Endothelial cell of umbilical vein (primary cell): ENCODE measurements at regions of chr19 and their contacts with region 1.

Region 1: DNA sequence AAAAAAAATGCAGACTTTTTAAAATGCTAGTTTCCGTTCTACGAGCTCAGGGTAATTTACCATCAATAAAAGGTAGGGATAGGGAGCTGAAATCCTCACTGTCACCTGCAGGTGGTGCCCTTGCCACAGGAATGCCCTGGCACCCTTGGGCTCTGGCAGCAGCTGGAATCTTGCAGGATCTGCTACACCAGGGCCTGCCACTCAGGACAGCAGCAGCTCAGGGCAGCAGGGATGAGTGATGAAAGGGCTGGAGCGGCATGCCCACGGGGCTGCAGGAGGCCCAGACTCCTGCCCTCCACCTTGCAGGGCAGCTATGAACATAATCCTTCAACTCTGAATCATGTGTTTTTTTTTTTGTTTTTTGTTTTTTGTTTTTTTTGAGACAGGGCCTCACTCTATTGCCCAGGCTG is 54.0 kb downstream of the GNG7 start:
- DNase-seq: peak; percentile 72
- H3K4me3 ChIP-seq: no peak overlapping the region
- H3K27ac ChIP-seq: no peak overlapping the region
- H3K4me1 ChIP-seq: no peaks in the 10 kb centered on the region
- H3K27me3 ChIP-seq: peaks cover 0 to 3% of the 10 kb centered on the region in 2 experiments
- CTCF ChIP-seq: peak; percentile 73 to 87
- POLR2A ChIP-seq: no peak

Region 2: GRCh38 chr19:2636897-2637683 is 11.4 kb before region 1 on chr19:
- CTCF ChIA-PET with region 1: interaction called, 16 read pairs
- POLR2A ChIA-PET with region 1: no interaction called
- dilution Hi-C with region 1: no loop called
- intact Hi-C with region 1: no loop called
- DNase-seq: peak; percentile 43
- H3K4me3 ChIP-seq: no peak overlapping the region
- H3K27ac ChIP-seq: no peak overlapping the region
- H3K4me1 ChIP-seq: no peaks in the 10 kb centered on the region
- H3K27me3 ChIP-seq: no peaks in the 10 kb centered on the region
- CTCF ChIP-seq: peak; percentile 75 to 93
- POLR2A ChIP-seq: no peak

Region 3: GRCh38 chr19:2670262-2670661 is 21.7 kb after region 1 on chr19:
- CTCF ChIA-PET with region 1: interaction called, 10 read pairs
- POLR2A ChIA-PET with region 1: no interaction called
- dilution Hi-C with region 1: no loop called
- intact Hi-C with region 1: no loop called
- DNase-seq: no peak
- H3K4me3 ChIP-seq: no peak overlapping the region
- H3K27ac ChIP-seq: no peak overlapping the region
- H3K4me1 ChIP-seq: no peaks in the 10 kb centered on the region
- H3K27me3 ChIP-seq: no peaks in the 10 kb centered on the region
- CTCF ChIP-seq: no peak
- POLR2A ChIP-seq: no peak

Region 4: GRCh38 chr19:2750808-2751443 is 102.4 kb after region 1 on chr19:
- CTCF ChIA-PET with region 1: interaction called, 233 read pairs
- POLR2A ChIA-PET with region 1: no interaction called
- dilution Hi-C with region 1: no loop called
- intact Hi-C with region 1: loop called (anchors 1 kb)
- DNase-seq: no peak
- H3K4me3 ChIP-seq: no peak overlapping the region
- H3K27ac ChIP-seq: no peak overlapping the region
- H3K4me1 ChIP-seq: no peaks in the 10 kb centered on the region
- H3K27me3 ChIP-seq: no peaks in the 10 kb centered on the region
- CTCF ChIP-seq: no peak
- POLR2A ChIP-seq: no peak

Region 5: DNA sequence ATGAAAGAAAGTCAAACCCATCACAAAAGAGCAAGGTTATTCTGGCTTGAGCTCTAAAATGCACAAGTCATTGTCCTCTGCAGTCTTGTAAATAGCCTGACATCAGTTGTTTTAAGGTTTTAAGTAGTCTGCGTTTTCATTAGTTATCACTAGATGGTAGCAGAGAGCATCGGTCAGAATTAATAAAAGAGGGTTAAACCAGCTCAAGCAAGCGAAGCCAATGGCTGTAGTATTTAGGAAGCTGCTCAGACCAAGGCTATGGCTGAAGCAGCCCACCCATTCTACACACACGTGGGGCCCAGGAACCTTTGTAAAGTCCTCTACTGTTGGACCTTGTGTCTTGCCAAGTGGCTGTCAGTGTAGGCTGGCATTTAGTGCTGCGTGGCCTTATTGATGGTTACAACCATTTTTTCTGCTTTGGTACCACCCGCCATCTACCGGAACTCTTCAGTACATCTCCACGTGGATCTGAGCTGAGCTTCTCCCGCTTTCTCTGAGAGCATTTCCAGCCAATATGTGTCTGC is 238.9 kb after region 1 on chr19:
- CTCF ChIA-PET with region 1: interaction called, 6 read pairs
- POLR2A ChIA-PET with region 1: no interaction called
- dilution Hi-C with region 1: no loop called
- intact Hi-C with region 1: loop called (anchors 1 kb)
- DNase-seq: peak; percentile 85
- H3K4me3 ChIP-seq: no peak overlapping the region
- H3K27ac ChIP-seq: no peak overlapping the region
- H3K4me1 ChIP-seq: peaks cover 3% of the 10 kb centered on the region
- H3K27me3 ChIP-seq: no peaks in the 10 kb centered on the region
- CTCF ChIP-seq: peak; percentile 58 to 60
- POLR2A ChIP-seq: no peak